WTC11 (cell line): ENCODE measurements at regions of chr7 and their contacts with region 1.

Region 1: DNA sequence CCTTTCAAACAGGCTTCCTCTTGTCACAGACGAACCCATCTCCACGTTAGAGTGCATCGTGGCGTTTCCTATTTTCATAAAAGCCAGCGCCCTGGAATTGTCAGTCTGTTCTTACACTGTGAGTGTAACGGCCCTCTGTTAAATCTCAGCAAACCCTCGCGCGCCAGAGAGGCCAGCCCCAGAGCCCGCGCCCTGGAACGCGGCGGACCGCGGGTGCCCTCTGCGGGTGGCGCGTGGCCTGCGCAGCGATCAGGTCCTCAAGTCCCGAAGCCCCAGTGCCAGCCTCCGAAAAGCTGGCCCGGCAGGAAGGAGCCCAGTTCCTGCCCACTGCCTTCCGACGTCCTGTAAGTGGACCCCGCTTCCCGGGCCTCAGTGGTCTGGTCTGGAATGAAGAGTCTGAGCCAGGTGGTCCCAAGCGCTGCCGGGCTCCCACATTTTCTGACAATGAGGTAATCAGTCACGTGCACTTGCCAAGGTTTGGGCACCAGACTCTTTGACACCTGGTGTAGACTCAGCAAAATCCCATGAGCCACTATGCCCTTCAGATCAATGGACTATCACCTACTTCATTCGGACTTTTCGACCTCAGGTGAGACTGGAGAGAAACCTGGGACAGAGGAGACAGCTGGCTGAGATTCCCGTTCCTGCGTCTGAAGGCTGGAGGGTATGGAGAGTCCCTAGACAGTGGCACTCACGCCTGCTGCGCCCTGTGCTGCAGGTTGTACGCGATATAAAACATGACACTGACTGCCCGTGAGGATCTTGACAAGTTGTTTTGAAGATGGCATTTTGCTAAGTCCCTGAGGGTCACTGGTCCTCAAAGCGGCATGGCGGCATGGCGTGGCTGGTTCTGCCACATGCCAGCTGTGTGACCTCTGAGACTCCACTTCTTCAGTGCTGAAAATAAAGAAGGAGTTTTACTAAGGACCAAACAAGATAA is 109.4 kb upstream of the LANCL2 start:
- DNase-seq: peak; percentile 81
- ATAC-seq: peak; percentile 68
- H3K4me3 Mint-ChIP-seq: peak overlapping the region; percentile 85
- H3K27ac Mint-ChIP-seq: no peak overlapping the region
- H3K4me1 Mint-ChIP-seq: peaks cover 6% of the 10 kb centered on the region
- H3K27me3 Mint-ChIP-seq: peaks cover 57% of the 10 kb centered on the region
- CTCF ChIP-seq: peak; percentile 50; the same call in 1 of the 2 replicates

Region 2: DNA sequence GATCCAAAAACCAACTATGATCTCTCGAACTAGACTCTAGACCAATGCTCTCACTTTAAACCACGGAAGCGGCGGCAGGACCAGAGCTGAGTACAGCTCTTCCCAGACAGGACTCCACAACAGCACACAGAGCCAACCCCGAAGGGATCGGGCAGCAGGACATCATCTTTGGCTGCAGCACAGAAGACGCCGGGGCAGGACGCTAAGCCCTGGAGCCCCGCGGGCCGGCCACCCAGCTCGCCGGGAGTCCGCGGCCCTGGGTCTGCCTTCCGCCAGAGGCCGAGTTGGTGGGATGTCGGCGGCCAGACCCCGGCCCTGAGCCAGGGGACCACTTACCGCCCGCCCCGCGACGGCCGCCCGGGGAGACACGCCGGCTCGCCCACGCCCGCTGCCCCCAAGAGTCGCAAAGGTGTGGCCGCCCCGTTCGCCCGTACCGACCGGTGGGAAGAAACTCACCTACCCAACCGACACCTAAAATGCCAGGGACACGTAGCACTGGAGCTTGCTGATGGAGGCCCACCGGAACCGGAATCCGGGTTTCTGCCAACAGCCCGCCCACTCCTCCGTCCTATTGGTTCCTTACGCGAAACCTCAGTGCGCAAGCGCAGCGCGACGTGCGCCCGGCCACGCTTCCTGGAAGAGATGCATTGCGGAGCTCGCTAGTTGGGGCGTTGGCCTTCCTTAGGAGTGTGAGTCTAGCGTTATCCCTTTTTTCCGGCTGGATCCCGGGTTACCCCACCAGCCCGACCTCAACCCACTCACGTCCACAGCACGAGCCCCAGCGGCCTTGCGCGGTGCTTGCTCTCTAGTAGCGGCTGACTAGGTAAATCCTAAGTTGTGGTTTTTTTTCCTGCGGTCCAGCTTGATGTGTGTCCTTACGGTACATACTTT is 496.8 kb before region 1 on chr7 and contains the start of gene SEC61G:
- CTCF ChIA-PET with region 1: interaction called, 16 read pairs
- POLR2A ChIA-PET with region 1: no interaction called
- DNase-seq: peak; percentile 94
- ATAC-seq: peak; percentile 94
- H3K4me3 Mint-ChIP-seq: peak within 1 kb of the TSS; percentile 100
- H3K27ac Mint-ChIP-seq: peak within 1 kb of the TSS; percentile 90
- H3K4me1 Mint-ChIP-seq: peaks cover 26% of the 10 kb centered on the region
- H3K27me3 Mint-ChIP-seq: no peaks in the 10 kb centered on the region
- CTCF ChIP-seq: no peak
- total RNA-seq, gene SEC61G: 186 to 208 TPM (median 190 TPM) in 3 replicates

Region 3: DNA sequence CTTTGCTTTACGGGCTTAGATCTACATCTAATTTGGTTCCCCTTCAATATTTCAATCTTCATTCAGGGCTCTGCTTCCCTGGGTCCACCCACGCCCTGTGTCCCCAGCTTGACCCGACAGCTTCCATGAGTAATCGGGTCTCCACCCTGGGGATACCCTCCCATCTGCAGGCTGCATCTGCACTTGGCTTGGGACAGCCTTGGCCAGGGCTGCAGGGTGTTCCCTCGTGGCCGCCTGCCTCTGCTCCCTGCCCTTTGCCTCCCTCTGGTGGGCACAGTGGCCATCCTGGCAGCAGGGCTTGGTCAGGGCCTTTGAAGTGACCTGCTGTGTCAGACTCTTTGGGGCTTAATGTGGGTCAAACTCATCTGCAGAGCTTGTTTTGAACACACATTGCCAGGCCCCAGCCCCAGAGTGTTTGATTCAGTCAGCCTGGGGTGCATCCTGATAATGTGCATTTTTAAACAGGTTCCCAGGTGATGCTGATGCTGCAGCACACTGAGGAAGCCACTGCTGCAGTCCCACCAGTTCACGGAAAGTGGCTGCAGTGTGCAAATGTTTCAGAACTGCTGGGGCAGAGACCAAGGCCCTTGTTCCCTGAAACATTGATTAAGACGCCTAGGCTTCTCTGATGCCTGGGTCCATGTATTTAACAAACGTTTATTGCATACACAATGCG is 416.1 kb before region 1 on chr7:
- CTCF ChIA-PET with region 1: interaction called, 24 read pairs
- POLR2A ChIA-PET with region 1: no interaction called
- DNase-seq: peak; percentile 78
- ATAC-seq: peak; percentile 98
- H3K4me3 Mint-ChIP-seq: no peak overlapping the region
- H3K27ac Mint-ChIP-seq: no peak overlapping the region
- H3K4me1 Mint-ChIP-seq: peaks cover 12% of the 10 kb centered on the region
- H3K27me3 Mint-ChIP-seq: no peaks in the 10 kb centered on the region
- CTCF ChIP-seq: peak; percentile 45; the same call in 1 of the 2 replicates

Region 4: DNA sequence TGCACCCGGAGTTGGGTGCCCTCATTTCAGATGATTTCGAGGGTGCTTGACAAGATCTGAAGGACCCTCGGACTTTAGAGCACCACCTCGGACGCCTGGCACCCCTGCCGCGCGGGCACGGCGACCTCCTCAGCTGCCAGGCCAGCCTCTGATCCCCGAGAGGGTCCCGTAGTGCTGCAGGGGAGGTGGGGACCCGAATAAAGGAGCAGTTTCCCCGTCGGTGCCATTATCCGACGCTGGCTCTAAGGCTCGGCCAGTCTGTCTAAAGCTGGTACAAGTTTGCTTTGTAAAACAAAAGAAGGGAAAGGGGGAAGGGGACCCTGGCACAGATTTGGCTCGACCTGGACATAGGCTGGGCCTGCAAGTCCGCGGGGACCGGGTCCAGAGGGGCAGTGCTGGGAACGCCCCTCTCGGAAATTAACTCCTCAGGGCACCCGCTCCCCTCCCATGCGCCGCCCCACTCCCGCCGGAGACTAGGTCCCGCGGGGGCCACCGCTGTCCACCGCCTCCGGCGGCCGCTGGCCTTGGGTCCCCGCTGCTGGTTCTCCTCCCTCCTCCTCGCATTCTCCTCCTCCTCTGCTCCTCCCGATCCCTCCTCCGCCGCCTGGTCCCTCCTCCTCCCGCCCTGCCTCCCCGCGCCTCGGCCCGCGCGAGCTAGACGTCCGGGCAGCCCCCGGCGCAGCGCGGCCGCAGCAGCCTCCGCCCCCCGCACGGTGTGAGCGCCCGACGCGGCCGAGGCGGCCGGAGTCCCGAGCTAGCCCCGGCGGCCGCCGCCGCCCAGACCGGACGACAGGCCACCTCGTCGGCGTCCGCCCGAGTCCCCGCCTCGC is 237.2 kb before region 1 on chr7 and contains the start of gene EGFR:
- CTCF ChIA-PET with region 1: interaction called, 16 read pairs
- POLR2A ChIA-PET with region 1: no interaction called
- DNase-seq: peak; percentile 62
- ATAC-seq: peak; percentile 74
- H3K4me3 Mint-ChIP-seq: peak within 1 kb of the TSS; percentile 66
- H3K27ac Mint-ChIP-seq: no peak within 1 kb of the TSS
- H3K4me1 Mint-ChIP-seq: peaks cover 5% of the 10 kb centered on the region; the same call in 1 of the 2 replicates
- H3K27me3 Mint-ChIP-seq: peaks cover 69% of the 10 kb centered on the region
- CTCF ChIP-seq: no peak
- total RNA-seq, gene EGFR: 5.9 to 7.6 TPM (median 6.0 TPM) in 3 replicates

Region 5: GRCh38 chr7:55130395-55131141 is 125.2 kb before region 1 on chr7:
- CTCF ChIA-PET with region 1: interaction called, 22 read pairs
- POLR2A ChIA-PET with region 1: no interaction called
- DNase-seq: no peak
- ATAC-seq: peak; percentile 14; the same call in 1 of the 2 replicates
- H3K4me3 Mint-ChIP-seq: no peak overlapping the region
- H3K27ac Mint-ChIP-seq: peak overlapping the region; percentile 19; the same call in 1 of the 2 replicates
- H3K4me1 Mint-ChIP-seq: peaks cover 33% of the 10 kb centered on the region
- H3K27me3 Mint-ChIP-seq: no peaks in the 10 kb centered on the region
- CTCF ChIP-seq: no peak

Region 6: DNA sequence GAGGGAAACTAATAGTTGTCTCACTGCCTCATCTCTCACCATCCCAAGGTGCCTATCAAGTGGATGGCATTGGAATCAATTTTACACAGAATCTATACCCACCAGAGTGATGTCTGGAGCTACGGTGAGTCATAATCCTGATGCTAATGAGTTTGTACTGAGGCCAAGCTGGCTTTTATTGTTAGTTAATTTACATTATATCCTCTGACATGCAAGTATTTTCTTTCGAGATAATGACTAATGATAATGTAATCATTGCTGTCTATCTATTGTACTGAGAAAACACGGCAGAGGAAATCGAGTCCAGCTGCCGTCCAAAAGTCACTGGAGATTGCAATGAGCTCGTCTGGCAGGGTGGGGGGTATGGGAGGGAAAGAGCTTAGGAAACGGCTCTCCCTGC is 63.0 kb before region 1 on chr7:
- CTCF ChIA-PET with region 1: interaction called, 22 read pairs
- POLR2A ChIA-PET with region 1: no interaction called
- DNase-seq: no peak
- ATAC-seq: no peak
- H3K4me3 Mint-ChIP-seq: no peak overlapping the region
- H3K27ac Mint-ChIP-seq: no peak overlapping the region
- H3K4me1 Mint-ChIP-seq: peaks cover 82% of the 10 kb centered on the region
- H3K27me3 Mint-ChIP-seq: no peaks in the 10 kb centered on the region
- CTCF ChIP-seq: no peak

Region 7: DNA sequence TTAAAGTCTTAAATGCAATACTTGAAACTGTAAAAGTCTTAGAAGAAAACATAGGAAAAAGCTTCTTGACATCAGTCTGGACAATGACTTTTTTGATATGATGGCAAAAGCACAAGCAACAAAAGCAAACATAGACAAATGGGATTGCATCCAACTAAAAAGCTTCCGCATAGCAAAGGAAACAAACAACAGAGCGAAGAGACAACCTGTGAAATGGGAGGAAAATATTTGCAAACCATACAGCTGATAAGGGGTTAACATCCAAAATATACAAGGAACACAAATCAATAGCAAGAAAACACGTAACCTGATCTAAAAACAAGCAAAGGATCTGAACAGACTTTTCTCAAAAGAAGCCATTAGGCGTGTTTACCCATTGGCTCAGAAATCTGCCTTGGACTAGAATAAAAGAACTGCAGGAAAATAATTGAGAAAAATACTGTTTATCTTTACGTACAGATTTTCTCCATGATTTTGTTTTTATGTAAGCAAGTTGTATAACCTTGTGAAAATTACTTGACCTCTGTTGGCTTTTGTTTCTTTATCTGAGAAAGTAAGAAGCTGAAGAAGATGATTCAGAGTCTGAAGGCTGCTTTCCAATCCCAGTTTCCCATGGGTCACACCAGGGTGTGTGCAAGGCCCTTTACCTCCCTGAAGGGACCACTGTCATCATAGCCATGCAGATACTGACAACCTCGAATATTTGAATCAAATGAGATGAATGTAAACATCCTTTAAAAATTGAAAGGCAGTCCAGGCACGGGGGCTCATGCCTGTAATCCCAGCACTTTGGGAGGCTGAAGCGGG is 10.3 kb after region 1 on chr7:
- CTCF ChIA-PET with region 1: interaction called, 29 read pairs
- POLR2A ChIA-PET with region 1: no interaction called
- DNase-seq: no peak
- ATAC-seq: no peak
- H3K4me3 Mint-ChIP-seq: no peak overlapping the region
- H3K27ac Mint-ChIP-seq: no peak overlapping the region
- H3K4me1 Mint-ChIP-seq: no peaks in the 10 kb centered on the region
- H3K27me3 Mint-ChIP-seq: no peaks in the 10 kb centered on the region
- CTCF ChIP-seq: no peak